ENCODE measurements at regions of chr11 and their contacts with region 1.

Region 1: DNA sequence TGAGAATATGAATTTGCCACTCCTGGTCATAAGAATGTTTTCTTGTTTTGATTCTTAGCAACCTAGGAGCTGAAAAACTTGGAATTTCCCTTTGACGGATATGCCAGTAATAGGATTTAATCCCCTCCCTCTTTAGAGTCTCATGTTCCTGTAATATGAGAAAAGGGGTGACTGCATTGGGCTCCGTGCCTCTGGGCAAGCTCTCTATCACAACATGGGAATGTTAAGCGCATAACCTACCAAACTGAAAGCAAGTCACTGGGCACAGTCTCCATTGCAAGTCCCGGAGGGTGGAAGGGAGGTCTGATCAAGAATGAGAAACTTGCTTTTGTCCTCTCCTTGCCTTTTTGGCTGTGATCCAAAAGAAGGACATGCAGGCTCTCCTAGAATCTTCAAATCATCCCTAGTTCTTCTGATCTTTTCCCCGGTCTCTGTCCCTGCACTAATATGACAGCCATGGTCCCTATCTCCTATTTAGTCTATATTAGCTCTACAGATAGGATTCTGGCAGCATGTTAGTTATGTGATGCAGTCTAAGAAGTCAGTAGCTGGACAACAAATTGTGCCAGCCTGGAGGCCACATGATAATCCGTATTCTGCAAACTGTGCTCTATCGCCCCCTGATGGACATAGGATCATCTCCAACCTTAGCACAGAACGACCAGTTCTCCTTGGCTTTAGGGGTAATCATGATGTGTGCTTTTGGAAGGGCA is 11.7 kb downstream of the OR10D3 start:
- DNase-seq: peak; percentile 41 to 62
- ATAC-seq: peak; percentile 93

Region 2: GRCh38 chr11:124070915-124071635 is 123.8 kb before region 1 on chr11:
- intact Hi-C with region 1: loop called in 1 of 2 experiments (anchors 10 kb)
- DNase-seq: peak in 1 of 2 donors; percentile 27
- ATAC-seq: no peak